H1 (cell line): ENCODE measurements at regions of chr16 and their contacts with region 1.

Region 1: DNA sequence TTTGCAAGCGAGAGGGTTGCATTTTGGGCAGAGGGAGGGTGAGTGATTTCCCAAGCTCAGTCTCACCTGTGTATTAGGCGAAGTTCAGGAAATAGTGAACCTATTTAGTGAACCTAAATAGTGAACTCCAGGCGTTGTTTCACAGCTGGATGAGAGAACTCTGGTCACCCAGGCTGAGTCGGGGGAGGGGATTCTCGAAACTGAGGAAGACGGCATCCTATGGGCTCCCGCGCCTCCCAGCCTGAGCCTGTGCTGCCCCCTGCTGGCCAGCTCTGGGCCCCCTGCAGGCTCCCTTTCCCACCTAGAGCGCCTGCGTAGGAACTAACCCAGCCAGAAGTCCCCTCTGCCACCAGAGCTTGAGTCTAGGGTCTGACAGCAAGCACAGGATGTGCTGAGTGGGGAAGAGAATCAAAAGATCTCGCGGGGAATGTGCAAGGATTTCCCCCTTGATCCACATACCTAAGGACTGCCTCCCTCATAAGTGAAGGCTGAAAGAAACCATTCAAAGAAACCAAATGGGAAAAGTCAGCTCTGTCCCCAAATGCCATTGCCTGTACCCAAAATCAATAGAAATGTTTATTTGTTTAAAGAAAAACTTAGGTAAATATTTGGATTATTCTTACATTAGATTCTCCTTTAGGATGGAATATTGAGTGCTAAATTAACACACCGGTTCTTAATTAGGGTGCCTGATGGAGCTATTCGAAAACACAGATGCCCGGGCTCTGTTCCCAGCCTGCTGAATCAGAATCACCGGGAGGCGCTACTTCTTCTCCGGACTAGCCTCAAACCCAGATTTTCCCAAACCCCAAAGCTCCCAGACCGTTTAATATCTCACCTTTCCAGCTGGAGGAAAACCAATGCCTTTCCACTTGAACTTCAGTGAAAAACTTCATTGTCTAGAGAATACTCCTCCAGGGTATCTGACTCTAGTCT is 14.8 kb upstream of the MARVELD3 start:
- DNase-seq: peak; percentile 53 to 98
- H3K4me3 ChIP-seq: peak overlapping the region in 1 of 4 experiments; percentile 38; a peak in 1 of 8 replicates
- H3K27ac ChIP-seq: no peak overlapping the region
- H3K4me1 ChIP-seq: peaks cover 0 to 2% (median 0%) of the 10 kb centered on the region in 4 experiments; a peak in 1 of 7 replicates
- H3K27me3 ChIP-seq: no peaks in the 10 kb centered on the region
- CTCF ChIP-seq: peak; percentile 84 to 95 (median 92)
- EP300 ChIP-seq: peak in 1 of 2 experiments; percentile 60; a peak in 1 of 3 replicates
- POLR2A ChIP-seq: no peak
- RAD21 ChIP-seq: peak; percentile 87 to 93

Region 2: GRCh38 chr16:71412270-71413160 is 198.7 kb before region 1 on chr16:
- CTCF ChIA-PET with region 1: interaction called, 15 read pairs
- POLR2A ChIA-PET with region 1: no interaction called
- DNase-seq: peak; percentile 80 to 94
- H3K4me3 ChIP-seq: peak overlapping the region; percentile 29 to 68 (median 59); a peak in 7 of 8 replicates
- H3K27ac ChIP-seq: peak overlapping the region; percentile 16; the same call in 1 of the 2 replicates
- H3K4me1 ChIP-seq: peaks cover 0 to 4% (median 0%) of the 10 kb centered on the region in 4 experiments; a peak in 2 of 7 replicates
- H3K27me3 ChIP-seq: peaks cover 0 to 2% (median under 1%) of the 10 kb centered on the region in 4 experiments; a peak in 1 of 7 replicates
- CTCF ChIP-seq: peak; percentile 84 to 90 (median 86)
- EP300 ChIP-seq: no peak
- POLR2A ChIP-seq: no peak
- RAD21 ChIP-seq: peak; percentile 86 to 91

Region 3: GRCh38 chr16:71461686-71462648 is 149.2 kb before region 1 on chr16 and contains the start of gene ZNF23:
- CTCF ChIA-PET with region 1: interaction called, 12 read pairs
- POLR2A ChIA-PET with region 1: interaction called, 3 read pairs
- DNase-seq: peak in 1 of 2 experiments; percentile 92
- H3K4me3 ChIP-seq: peak within 1 kb of the TSS; percentile 82 to 100 (median 98)
- H3K27ac ChIP-seq: peak within 1 kb of the TSS; percentile 90
- H3K4me1 ChIP-seq: peaks cover 0 to 2% (median 0%) of the 10 kb centered on the region in 4 experiments; a peak in 1 of 7 replicates
- H3K27me3 ChIP-seq: no peaks in the 10 kb centered on the region
- CTCF ChIP-seq: peak in 2 of 3 experiments; percentile 6 to 8; a peak in 1 of 4 replicates
- EP300 ChIP-seq: no peak
- POLR2A ChIP-seq: peak; percentile 93 to 96
- RAD21 ChIP-seq: peak in 1 of 2 experiments; percentile 7; a peak in 1 of 4 replicates
- total RNA-seq, gene ZNF23: 10.2 and 12.7 TPM in 2 replicates

Region 4: DNA sequence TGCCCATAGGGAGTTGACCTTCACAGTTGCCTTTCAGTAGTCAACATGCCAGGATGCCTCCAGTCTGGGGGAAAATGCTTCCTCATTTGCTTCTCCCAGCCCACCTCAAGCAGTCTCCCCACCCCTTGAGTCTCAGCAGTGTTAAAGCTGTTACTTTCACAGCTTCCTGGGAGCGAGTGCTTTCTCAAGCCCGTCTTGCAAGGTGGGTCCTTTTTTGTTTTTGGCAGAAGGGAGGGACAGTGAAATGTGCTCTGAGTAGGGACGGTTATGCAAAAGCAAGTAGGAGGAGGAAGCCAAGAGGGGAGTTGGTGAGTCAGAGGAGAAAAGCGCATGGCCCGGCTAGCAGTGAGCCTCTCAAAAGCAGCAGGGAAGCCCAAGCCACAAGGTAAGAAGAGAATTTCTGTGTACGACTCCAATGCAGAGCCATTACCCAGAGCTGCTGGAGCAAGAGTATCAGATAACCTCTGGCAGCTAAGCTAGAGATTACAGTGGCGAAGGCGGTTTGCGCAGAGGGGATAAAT is 85.0 kb before region 1 on chr16 and contains the start of gene CHST4:
- CTCF ChIA-PET with region 1: interaction called, 13 read pairs
- POLR2A ChIA-PET with region 1: interaction called, 5 read pairs
- DNase-seq: peak; percentile 66 to 82
- H3K4me3 ChIP-seq: peak within 1 kb of the TSS; percentile 25 to 60 (median 44)
- H3K27ac ChIP-seq: peak within 1 kb of the TSS; percentile 89
- H3K4me1 ChIP-seq: peaks cover 0 to 18% (median 13%) of the 10 kb centered on the region in 4 experiments; a peak in 4 of 7 replicates
- H3K27me3 ChIP-seq: no peaks in the 10 kb centered on the region
- CTCF ChIP-seq: no peak
- EP300 ChIP-seq: no peak
- POLR2A ChIP-seq: peak; percentile 68 to 92
- RAD21 ChIP-seq: no peak
- total RNA-seq, gene CHST4: 11.7 and 12.1 TPM in 2 replicates

Region 5: DNA sequence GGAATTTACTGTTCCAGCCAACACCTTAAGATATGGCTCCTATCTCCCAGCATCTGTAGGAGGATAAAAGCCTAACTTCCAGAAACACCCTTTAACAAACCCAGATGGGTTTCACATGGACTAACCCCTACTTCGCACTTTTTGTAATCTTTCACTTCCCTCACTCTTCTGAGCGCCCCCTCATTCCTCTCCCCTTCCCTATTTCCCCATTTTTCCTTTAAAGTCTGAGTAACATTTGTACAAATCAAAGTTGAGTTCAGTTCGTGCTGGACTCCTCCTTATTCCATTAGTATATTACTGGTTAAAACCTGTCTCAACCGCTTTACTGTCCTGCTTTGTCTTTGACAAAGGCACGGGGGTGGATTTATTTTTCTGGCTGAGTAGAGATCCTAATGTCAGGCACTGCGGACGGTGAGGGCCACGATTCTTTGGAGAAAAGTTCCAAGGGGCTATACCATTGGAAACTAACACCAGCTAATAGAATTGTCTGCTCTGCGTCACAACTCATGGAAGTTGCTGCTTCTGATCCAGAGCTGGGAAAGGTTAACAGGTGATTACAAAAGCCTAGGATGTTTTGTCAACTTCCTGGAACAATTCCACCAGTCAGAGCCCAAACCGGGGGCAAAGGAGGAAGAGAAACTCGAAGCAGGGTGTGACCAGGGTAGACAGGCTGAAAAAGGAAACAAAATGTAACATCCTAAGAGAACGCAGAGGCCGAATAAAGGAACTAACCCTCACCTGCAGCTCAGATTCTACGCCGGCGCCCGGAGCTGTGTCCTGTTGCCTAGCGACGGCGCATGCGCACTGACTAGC is 46.8 kb before region 1 on chr16:
- CTCF ChIA-PET with region 1: interaction called, 89 read pairs
- POLR2A ChIA-PET with region 1: interaction called, 11 read pairs
- DNase-seq: peak in 1 of 2 experiments; percentile 98
- H3K4me3 ChIP-seq: peak overlapping the region; percentile 60 to 76 (median 68)
- H3K27ac ChIP-seq: peak overlapping the region; percentile 55; the same call in 1 of the 2 replicates
- H3K4me1 ChIP-seq: peaks cover 0 to 2% (median 0%) of the 10 kb centered on the region in 4 experiments; a peak in 1 of 7 replicates
- H3K27me3 ChIP-seq: no peaks in the 10 kb centered on the region
- CTCF ChIP-seq: no peak
- EP300 ChIP-seq: no peak
- POLR2A ChIP-seq: peak in 1 of 2 experiments; percentile 10; a peak in 2 of 3 replicates
- RAD21 ChIP-seq: no peak

Region 6: GRCh38 chr16:71628810-71629209 is 17.6 kb after region 1 on chr16:
- CTCF ChIA-PET with region 1: interaction called, 9 read pairs
- POLR2A ChIA-PET with region 1: interaction called, 11 read pairs
- DNase-seq: no peak
- H3K4me3 ChIP-seq: no peak overlapping the region
- H3K27ac ChIP-seq: no peak overlapping the region
- H3K4me1 ChIP-seq: peaks cover 0 to 12% (median 6%) of the 10 kb centered on the region in 4 experiments; a peak in 6 of 7 replicates
- H3K27me3 ChIP-seq: no peaks in the 10 kb centered on the region
- CTCF ChIP-seq: no peak
- EP300 ChIP-seq: no peak
- POLR2A ChIP-seq: no peak
- RAD21 ChIP-seq: no peak